GM10248 (cell line): ENCODE measurements at regions of chr19 and their contacts with region 1.

Region 1: GRCh38 chr19:6048808-6049405 is 61.4 kb downstream of the RFX2 start:
- DNase-seq: peak; percentile 89
- CTCF ChIP-seq: peak; percentile 93

Region 2: GRCh38 chr19:5987077-5987818 is 61.7 kb before region 1 on chr19:
- CTCF ChIA-PET with region 1: interaction called, 15 read pairs
- POLR2A ChIA-PET with region 1: no interaction called
- DNase-seq: peak; percentile 79
- CTCF ChIP-seq: peak; percentile 94

Region 3: GRCh38 chr19:6032827-6033226 is 16.1 kb before region 1 on chr19:
- CTCF ChIA-PET with region 1: interaction called, 26 read pairs
- POLR2A ChIA-PET with region 1: no interaction called
- DNase-seq: no peak
- CTCF ChIP-seq: no peak

Region 4: GRCh38 chr19:6038634-6039405 is 10.1 kb before region 1 on chr19:
- CTCF ChIA-PET with region 1: interaction called, 26 read pairs
- POLR2A ChIA-PET with region 1: no interaction called
- DNase-seq: peak; percentile 80
- CTCF ChIP-seq: no peak

Region 5: DNA sequence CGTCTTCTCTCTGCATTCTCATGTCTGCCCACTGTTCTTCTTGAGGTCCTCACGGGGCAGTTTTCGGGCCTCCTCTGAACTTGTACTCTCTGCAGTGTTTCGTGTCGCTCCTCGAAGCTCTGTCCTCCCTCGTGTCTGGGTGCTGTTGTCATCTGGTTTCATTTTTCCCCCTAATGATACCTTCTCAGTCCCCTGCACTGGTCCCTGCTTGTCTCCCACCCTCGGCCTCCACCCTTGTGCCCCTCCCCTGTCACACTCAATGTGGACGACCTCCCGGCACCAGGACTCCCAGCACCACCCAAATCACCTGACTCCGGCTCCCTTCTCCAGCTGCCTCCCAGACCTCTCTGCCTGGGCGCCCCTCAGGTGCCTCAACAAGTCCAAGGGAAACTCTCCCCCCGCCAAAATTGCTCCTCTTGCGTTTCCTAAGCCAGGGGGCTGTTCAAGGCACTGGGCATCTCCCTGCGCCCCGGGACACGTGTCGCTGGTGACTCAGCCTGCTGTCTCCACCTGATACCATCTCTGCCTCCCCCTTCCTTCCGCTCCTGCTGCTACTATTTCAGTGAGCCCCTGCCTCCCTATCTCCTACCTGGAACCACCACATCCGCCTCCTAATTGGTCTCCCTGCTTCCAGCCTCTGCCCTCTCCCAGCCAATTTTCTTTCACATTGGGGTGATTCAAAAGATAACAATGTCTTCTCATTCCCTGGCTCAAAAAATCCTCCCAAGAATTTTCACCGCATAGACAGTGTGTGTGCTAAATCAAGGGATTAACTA is 11.9 kb after region 1 on chr19:
- CTCF ChIA-PET with region 1: interaction called, 16 read pairs
- POLR2A ChIA-PET with region 1: no interaction called
- DNase-seq: no peak
- CTCF ChIP-seq: no peak

Region 6: GRCh38 chr19:6103217-6103644 is 54.3 kb after region 1 on chr19:
- CTCF ChIA-PET with region 1: interaction called, 14 read pairs
- POLR2A ChIA-PET with region 1: no interaction called
- DNase-seq: no peak
- CTCF ChIP-seq: no peak

Region 7: DNA sequence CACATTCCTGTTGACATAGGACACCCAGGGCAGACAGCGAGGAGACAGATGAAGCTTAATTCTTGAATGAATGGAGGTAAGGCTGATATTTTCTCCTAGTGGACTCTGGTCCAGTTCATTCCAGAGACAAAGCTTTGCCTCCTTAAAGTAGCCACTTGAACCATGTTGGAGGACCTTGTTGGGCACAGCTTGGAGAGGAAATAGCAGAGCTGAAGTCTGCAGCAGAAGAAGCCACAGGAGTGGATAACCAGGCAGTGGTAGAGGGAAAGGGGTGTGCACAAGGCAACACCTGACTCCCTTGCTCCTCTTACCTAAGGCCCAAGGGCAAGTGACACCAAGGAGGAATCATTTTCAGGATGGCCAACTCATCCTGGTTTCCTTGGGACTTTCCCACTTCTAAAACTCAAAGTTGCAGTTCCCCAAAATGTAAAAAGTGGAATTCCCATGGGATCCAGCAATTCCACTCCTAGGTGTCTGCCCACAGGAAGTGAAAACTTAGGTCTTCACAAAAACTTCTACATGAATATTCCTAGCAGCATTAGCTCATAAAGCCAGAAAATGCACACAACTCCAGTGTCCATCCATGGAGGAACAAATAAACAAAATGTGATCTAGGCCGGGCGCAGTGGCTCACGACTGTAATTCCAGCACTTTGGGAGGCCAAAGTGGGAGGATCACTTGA is 68.0 kb after region 1 on chr19:
- CTCF ChIA-PET with region 1: interaction called, 41 read pairs
- POLR2A ChIA-PET with region 1: interaction called, 3 read pairs
- DNase-seq: no peak
- CTCF ChIP-seq: no peak